Activated T-helper 1 cell treated with anti-CD3 and anti-CD28 coated beads, Interleukin-12 subunit alpha, Interleukin-12 subunit beta, Interleukin-2, Interleukin-4 antibody, amounts not matched to agents 30 ng/mL and 10 ng/mL and 1 ng/mL, durations not matched to agents 14 hours and 24 hours and 36 hours (primary cell): ENCODE measurements at regions of chr6 and their contacts with region 1.

Region 1: DNA sequence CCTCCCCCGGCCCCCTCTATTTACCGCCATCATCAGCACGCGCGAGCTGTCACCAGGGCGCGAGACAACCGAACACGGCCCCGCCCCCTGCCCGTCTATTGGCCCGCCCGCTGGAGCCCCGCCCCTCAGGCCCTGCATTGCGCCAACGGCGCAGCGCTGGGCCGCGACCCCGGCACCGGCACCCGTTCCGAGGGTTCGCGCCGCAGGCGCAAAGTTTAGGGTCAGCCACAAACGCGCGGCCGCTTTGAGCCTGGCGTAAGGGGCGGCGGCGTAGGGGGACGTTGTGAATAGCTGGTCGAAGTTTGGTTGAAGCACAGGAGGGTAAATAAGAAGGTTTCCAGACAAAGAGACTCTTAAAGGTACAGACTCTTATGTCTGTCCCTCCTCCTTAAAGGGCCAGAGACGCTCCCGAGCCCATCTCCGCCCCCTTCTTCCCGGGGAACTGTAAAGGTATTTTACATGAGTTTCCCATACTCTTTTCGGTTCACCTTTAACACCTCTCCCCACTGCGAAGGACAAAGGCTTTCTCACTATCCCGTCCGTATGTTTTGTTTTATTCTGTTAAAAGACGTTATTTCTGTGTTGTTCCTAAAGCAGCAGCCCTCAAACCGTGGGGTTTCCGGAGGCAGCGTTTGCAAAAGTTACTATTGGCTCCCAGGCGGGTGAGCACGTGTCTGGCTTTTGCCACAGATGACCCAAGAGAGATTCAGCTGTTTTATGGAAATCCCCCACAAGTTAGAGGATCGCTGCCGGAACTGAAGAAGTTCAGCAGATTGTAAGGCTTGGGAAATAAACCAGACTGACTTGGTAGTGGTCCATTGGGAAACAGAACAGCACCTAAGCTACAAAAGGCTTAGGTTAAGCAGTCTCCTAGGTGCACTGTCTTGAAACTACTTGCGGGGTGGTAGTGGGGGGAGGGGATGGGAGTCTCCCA is at the start of gene USP49:
- DNase-seq: peak; percentile 84
- H3K4me3 Mint-ChIP-seq: no peak within 1 kb of the TSS
- H3K27ac Mint-ChIP-seq: peak within 1 kb of the TSS; percentile 97
- H3K4me1 Mint-ChIP-seq: peaks cover 10% of the 10 kb centered on the region
- H3K27me3 Mint-ChIP-seq: no peaks in the 10 kb centered on the region
- total RNA-seq, gene USP49: 4.8 and 5.3 TPM in 2 replicates

Region 2: GRCh38 chr6:41735427-41736356 is 159.9 kb before region 1 on chr6 and contains the start of gene TFEB:
- intact Hi-C with region 1: loop called (anchors 1 kb)
- DNase-seq: peak; percentile 92
- H3K4me3 Mint-ChIP-seq: peak within 1 kb of the TSS; percentile 80
- H3K27ac Mint-ChIP-seq: peak within 1 kb of the TSS; percentile 31
- H3K4me1 Mint-ChIP-seq: peaks cover 23% of the 10 kb centered on the region
- H3K27me3 Mint-ChIP-seq: no peaks in the 10 kb centered on the region
- total RNA-seq, gene TFEB: 15.6 and 17.2 TPM in 2 replicates

Region 3: GRCh38 chr6:41846666-41847237 is 48.8 kb before region 1 on chr6:
- intact Hi-C with region 1: loop called (anchors 2 kb)
- DNase-seq: peak; percentile 31
- H3K4me3 Mint-ChIP-seq: no peak overlapping the region
- H3K27ac Mint-ChIP-seq: no peak overlapping the region
- H3K4me1 Mint-ChIP-seq: peaks cover 11% of the 10 kb centered on the region
- H3K27me3 Mint-ChIP-seq: no peaks in the 10 kb centered on the region

Region 4: DNA sequence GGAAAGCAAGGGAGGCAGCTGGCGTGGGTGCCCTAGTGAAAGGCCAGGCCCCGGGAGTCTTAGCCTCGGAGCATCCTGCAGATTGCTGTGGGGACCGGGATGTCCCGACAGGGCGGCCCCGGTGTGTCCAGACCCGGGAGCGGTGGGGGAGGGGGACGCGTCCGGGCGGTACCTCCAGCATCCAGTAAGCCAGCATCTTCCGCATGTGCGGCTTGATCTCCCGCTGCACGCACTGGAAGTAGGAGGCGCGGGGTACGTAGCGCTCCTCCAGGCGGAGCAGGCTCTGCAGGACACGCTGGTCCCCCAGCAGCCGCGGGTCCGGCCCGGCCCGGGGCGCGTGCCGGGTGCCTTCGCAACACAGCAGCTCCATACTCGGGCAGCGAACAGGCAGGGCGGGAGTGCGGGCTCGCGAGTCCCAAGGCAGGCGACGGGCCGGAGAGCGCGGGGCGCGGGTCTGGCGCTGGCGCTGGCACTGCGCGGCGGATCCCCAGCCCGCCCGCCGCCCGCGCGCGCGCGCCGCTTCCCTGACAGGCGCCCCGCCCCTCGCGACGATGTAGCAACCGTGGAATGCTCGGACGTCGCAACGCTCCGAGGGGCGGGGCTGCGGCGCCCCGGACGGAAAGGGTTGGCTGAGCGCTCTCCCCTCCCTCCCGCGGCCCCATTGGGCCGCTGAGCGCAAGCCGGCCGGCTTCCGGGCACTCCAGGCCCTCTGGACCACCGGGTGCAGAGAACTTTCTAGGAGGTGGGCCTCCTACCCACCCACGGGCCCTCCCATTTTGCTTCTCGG is 45.9 kb after region 1 on chr6 and contains the start of gene CCND3:
- intact Hi-C with region 1: loop called (anchors 1 kb)
- DNase-seq: peak; percentile 89
- H3K4me3 Mint-ChIP-seq: peak within 1 kb of the TSS; percentile 99
- H3K27ac Mint-ChIP-seq: peak within 1 kb of the TSS; percentile 94
- H3K4me1 Mint-ChIP-seq: peaks cover 43% of the 10 kb centered on the region
- H3K27me3 Mint-ChIP-seq: no peaks in the 10 kb centered on the region
- total RNA-seq, gene CCND3: 351 and 356 TPM in 2 replicates

Region 5: GRCh38 chr6:42043787-42044475 is 148.4 kb after region 1 on chr6:
- intact Hi-C with region 1: loop called (anchors 1 kb)
- DNase-seq: peak; percentile 87
- H3K4me3 Mint-ChIP-seq: peak overlapping the region; percentile 70
- H3K27ac Mint-ChIP-seq: peak overlapping the region; percentile 83
- H3K4me1 Mint-ChIP-seq: peaks cover 82% of the 10 kb centered on the region
- H3K27me3 Mint-ChIP-seq: no peaks in the 10 kb centered on the region

Region 6: DNA sequence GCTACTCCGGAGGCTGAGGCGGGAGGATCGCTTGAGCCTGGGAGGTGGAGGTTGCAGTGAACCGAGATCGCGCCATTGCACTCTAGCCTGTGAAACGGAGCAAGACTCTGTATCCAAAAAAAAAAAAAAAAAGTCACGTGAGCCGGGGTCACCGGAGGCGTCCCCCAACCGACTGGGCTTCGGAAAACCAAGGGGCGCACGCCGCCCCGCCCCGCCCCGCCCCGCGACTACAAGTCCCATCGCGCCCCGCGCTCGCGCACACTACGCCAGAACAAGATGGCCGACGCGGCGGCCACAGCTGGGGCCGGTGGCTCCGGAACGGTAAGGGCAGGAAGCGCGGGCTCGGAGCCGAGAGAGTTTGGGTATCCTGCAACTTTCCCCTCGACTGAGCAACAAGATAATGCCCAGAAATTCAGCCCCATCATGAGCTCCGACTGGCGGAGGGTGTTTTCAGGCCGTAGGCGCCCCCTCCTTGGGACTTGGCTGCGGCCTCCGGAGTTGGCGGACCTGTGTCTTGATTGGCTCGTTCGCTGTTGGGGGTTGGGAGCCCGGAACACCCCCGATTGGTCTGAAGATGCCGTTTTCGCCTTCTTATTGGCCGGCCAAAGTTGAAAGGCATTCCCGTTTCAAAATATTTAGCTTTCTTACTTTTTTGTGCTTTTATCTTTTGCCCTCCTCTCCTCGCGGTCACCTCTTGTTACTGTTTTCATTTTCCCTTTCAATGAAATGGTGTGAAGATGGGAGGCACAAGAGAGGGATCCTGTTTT is 154.9 kb after region 1 on chr6 and contains the start of gene TAF8:
- intact Hi-C with region 1: loop called (anchors 1 kb)
- DNase-seq: peak; percentile 87
- H3K4me3 Mint-ChIP-seq: peak within 1 kb of the TSS; percentile 93
- H3K27ac Mint-ChIP-seq: peak within 1 kb of the TSS; percentile 92
- H3K4me1 Mint-ChIP-seq: peaks cover 58% of the 10 kb centered on the region
- H3K27me3 Mint-ChIP-seq: no peaks in the 10 kb centered on the region
- total RNA-seq, gene TAF8: 36.7 and 38.3 TPM in 2 replicates

Region 7: GRCh38 chr6:42104095-42104806 is 208.7 kb after region 1 on chr6:
- intact Hi-C with region 1: no loop called
- DNase-seq: peak; percentile 60
- H3K4me3 Mint-ChIP-seq: peak overlapping the region; percentile 70
- H3K27ac Mint-ChIP-seq: peak overlapping the region; percentile 67
- H3K4me1 Mint-ChIP-seq: peaks cover 39% of the 10 kb centered on the region
- H3K27me3 Mint-ChIP-seq: peaks cover 1% of the 10 kb centered on the region

Region 8: DNA sequence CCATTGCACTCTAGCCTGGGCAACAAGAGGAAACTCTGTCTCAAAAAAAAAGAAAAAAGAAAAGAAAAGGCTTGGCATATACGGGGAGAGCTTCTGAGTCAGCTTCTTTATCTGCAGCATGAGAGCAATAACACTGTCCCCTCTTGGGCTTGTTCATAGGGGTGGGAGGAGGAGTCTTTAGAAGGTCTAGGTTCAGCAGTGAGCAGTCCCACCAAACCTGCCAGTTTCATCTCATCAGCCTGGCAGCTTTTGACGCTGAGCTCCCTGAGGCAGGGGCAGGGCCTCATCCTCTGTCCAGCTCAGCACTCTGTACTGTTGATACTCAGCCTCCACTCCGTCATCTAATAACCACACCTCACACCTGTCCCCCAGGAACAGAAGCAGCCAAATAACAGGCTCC is 252.5 kb after region 1 on chr6:
- intact Hi-C with region 1: no loop called
- DNase-seq: no peak
- H3K4me3 Mint-ChIP-seq: no peak overlapping the region
- H3K27ac Mint-ChIP-seq: no peak overlapping the region
- H3K4me1 Mint-ChIP-seq: no peaks in the 10 kb centered on the region
- H3K27me3 Mint-ChIP-seq: peaks cover 13% of the 10 kb centered on the region